ENCODE measurements at regions of chr5 and their contacts with region 1.

Region 1: GRCh38 chr5:34053133-34053532 is 10.1 kb upstream of the C1QTNF3 start:
- DNase-seq: peak; percentile 91
- H3K4me3 ChIP-seq: no peak overlapping the region
- H3K27ac ChIP-seq: peak overlapping the region; percentile 54
- H3K4me1 ChIP-seq: peaks cover 27% of the 10 kb centered on the region
- H3K27me3 ChIP-seq: no peaks in the 10 kb centered on the region
- CTCF ChIP-seq: no peak

Region 2: DNA sequence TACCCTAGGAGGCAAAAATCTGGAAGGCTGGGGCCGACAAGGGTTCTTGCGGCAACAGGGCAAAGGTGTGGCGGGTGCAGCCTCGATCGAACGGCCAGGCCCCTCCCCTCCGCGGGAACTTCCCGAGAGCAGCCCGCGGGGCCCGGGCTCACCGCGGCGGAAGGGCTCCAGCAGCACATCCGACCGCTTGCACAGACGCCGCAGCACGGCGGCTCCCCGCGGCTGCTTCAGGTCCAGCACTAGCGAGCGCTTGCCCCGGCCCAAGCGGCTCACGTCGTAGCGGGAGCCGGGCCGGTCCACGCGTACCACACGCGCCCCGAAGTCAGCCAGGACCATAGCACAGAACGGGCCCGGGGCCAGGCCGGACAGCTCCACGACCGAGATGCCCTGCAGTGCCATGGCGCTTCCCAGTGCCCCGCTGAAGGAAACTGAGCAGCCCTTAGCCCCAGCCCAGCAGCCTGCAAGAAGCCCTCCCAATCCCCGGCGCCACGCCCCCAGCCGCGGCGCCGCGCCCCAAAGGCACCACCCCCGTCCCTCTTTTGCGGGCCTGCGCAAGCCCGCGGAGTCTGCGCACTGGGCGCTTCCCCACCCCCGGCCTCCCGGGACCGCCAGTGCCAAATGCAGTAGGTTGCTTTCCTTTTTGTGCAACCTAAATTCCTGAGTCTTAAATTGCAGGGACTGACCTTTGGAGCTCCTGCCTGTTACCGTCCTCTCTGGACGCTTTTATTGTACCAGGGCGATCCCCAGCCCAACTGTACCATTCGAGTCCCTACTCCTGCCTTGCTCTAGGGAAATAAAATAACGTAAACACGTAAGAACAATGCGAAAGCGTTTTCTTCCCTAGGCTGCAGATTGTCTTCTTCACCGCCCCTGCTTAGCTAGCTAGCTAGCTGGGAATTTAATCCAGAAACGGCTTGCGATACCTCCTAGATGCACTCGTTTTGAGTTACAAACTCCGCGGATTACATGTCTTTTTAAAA is 45.2 kb before region 1 on chr5 and contains the start of gene AMACR:
- CTCF ChIA-PET with region 1: no interaction called
- dilution Hi-C with region 1: no loop called
- in situ Hi-C with region 1: no loop called
- intact Hi-C with region 1: loop called (anchors 5 kb)
- DNase-seq: peak; percentile 89
- H3K4me3 ChIP-seq: peak within 1 kb of the TSS; percentile 86 to 89 (median 87)
- H3K27ac ChIP-seq: peak within 1 kb of the TSS; percentile 80
- H3K4me1 ChIP-seq: peaks cover 14% of the 10 kb centered on the region
- H3K27me3 ChIP-seq: no peaks in the 10 kb centered on the region
- CTCF ChIP-seq: peak in 1 of 2 donors; percentile 28
- total RNA-seq, gene AMACR: 14.2 to 19.5 TPM

Region 3: GRCh38 chr5:34756781-34757624 is 703.9 kb after region 1 on chr5:
- CTCF ChIA-PET with region 1: no interaction called
- dilution Hi-C with region 1: no loop called
- in situ Hi-C with region 1: no loop called
- intact Hi-C with region 1: no loop called
- DNase-seq: no peak
- H3K4me3 ChIP-seq: no peak overlapping the region
- H3K27ac ChIP-seq: no peak overlapping the region
- H3K4me1 ChIP-seq: no peaks in the 10 kb centered on the region
- H3K27me3 ChIP-seq: no peaks in the 10 kb centered on the region
- CTCF ChIP-seq: no peak